ENCODE measurements at regions of chr19 and their contacts with region 1.

Region 1: GRCh38 chr19:40662921-40663694 is 27.3 kb downstream of the NUMBL start:
- DNase-seq: peak; percentile 61 to 93
- H3K4me3 ChIP-seq: peak overlapping the region; percentile 94
- H3K27ac ChIP-seq: peak overlapping the region; percentile 60
- H3K4me1 ChIP-seq: peaks cover 34% of the 10 kb centered on the region
- H3K27me3 ChIP-seq: no peaks in the 10 kb centered on the region
- CTCF ChIP-seq: peak; percentile 95; the same call in 1 of the 2 replicates

Region 2: GRCh38 chr19:40716655-40717324 is 53.7 kb after region 1 on chr19 and contains the starts of genes COQ8B and ITPKC:
- CTCF ChIA-PET with region 1: interaction called, 3 read pairs
- POLR2A ChIA-PET with region 1: no interaction called
- intact Hi-C with region 1: loop called (anchors 1 kb)
- DNase-seq: peak; percentile 94 to 99
- H3K4me3 ChIP-seq: peak within 1 kb of the TSS; percentile 75
- H3K27ac ChIP-seq: peak within 1 kb of the TSS; percentile 99
- H3K4me1 ChIP-seq: peaks cover 27% of the 10 kb centered on the region
- H3K27me3 ChIP-seq: no peaks in the 10 kb centered on the region
- CTCF ChIP-seq: no peak
- total RNA-seq, gene COQ8B: 57.7 and 66.6 TPM in 2 replicates
- total RNA-seq, gene ITPKC: 17.6 and 22.1 TPM in 2 replicates

Region 3: GRCh38 chr19:40798223-40798996 is 135.3 kb after region 1 on chr19:
- CTCF ChIA-PET with region 1: no interaction called
- POLR2A ChIA-PET with region 1: no interaction called
- intact Hi-C with region 1: loop called (anchors 1 kb)
- DNase-seq: peak; percentile 95 to 100
- H3K4me3 ChIP-seq: peak overlapping the region; percentile 52
- H3K27ac ChIP-seq: peak overlapping the region; percentile 11; the same call in 1 of the 2 replicates
- H3K4me1 ChIP-seq: peaks cover 28% of the 10 kb centered on the region
- H3K27me3 ChIP-seq: no peaks in the 10 kb centered on the region
- CTCF ChIP-seq: peak; percentile 60; the same call in 1 of the 2 replicates

Region 4: DNA sequence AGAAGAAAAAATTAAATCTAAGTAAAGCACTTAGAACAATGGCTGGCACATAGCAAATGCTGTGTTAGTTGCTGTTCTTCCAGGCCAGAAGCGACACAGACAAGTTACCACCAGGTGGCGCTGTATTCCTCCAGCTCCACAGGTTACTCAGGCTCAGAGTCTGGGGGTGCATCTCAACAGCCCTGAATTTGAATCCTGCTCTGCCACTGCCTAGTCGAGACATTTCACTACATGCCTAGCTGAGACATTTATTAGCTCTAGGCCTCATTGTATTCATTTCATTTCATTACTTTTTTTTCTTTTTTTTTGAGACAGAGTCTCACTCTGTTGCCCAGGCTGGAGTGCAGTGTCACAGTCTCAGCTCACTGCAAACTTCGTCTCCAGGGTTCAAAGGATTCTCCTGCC is 311.5 kb after region 1 on chr19:
- CTCF ChIA-PET with region 1: no interaction called
- POLR2A ChIA-PET with region 1: no interaction called
- intact Hi-C with region 1: loop called (anchors 2 kb)
- DNase-seq: peak; percentile 42 to 63
- H3K4me3 ChIP-seq: no peak overlapping the region
- H3K27ac ChIP-seq: no peak overlapping the region
- H3K4me1 ChIP-seq: no peaks in the 10 kb centered on the region
- H3K27me3 ChIP-seq: peaks cover 7% of the 10 kb centered on the region; the same call in 1 of the 2 replicates
- CTCF ChIP-seq: peak; percentile 94

Region 5: GRCh38 chr19:41263850-41264580 is 600.9 kb after region 1 on chr19 and contains the start of gene HNRNPUL1:
- CTCF ChIA-PET with region 1: interaction called, 3 read pairs
- POLR2A ChIA-PET with region 1: no interaction called
- intact Hi-C with region 1: loop called (anchors 1 kb)
- DNase-seq: peak; percentile 99 to 100
- H3K4me3 ChIP-seq: peak within 1 kb of the TSS; percentile 85
- H3K27ac ChIP-seq: peak within 1 kb of the TSS; percentile 90
- H3K4me1 ChIP-seq: peaks cover 10% of the 10 kb centered on the region; the same call in 1 of the 2 replicates
- H3K27me3 ChIP-seq: no peaks in the 10 kb centered on the region
- CTCF ChIP-seq: no peak
- total RNA-seq, gene HNRNPUL1: 248 and 266 TPM in 2 replicates

Region 6: DNA sequence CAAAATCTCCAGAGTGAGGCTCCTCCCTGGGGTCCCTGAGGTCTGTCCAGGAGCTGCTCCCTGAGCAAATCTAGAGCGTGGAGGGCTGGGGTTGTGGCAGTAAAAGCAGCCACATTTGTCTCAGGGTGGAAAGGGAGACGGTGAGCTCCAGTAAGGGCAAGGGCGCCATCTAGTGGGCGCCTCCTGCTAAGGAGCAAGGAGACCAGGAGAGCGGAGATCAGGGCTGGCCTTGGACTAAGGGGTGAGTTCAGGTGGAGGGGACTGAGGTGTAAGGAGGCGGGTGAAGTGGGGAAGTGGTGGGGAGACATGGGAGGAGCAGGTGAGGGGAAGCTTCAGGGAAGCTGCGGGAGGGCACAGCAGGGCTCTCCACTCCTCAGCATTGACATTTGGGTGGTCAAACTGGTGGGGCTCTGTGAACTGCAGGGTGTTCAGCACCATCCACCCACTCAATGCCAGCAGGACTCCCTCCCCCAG is 907.6 kb after region 1 on chr19:
- CTCF ChIA-PET with region 1: no interaction called
- POLR2A ChIA-PET with region 1: no interaction called
- intact Hi-C with region 1: loop called (anchors 10 kb)
- DNase-seq: peak in 1 of 2 experiments; percentile 69
- H3K4me3 ChIP-seq: no peak overlapping the region
- H3K27ac ChIP-seq: no peak overlapping the region
- H3K4me1 ChIP-seq: no peaks in the 10 kb centered on the region
- H3K27me3 ChIP-seq: peaks cover 57% of the 10 kb centered on the region
- CTCF ChIP-seq: peak; percentile 93

Measured in PC-9 (cell line).